PC-9 (cell line): ENCODE measurements at regions of chrX and their contacts with region 1.

Region 1: GRCh38 chrX:13721819-13722519 is 12.5 kb downstream of the TRAPPC2 start:
- DNase-seq: peak; percentile 11 to 85
- H3K4me3 ChIP-seq: no peak overlapping the region
- H3K27ac ChIP-seq: peak overlapping the region; percentile 46; the same call in 1 of the 2 replicates
- H3K4me1 ChIP-seq: peaks cover 15% of the 10 kb centered on the region
- H3K27me3 ChIP-seq: no peaks in the 10 kb centered on the region
- CTCF ChIP-seq: no peak

Region 2: GRCh38 chrX:13837290-13837745 is 115.3 kb after region 1 on chrX:
- CTCF ChIA-PET with region 1: no interaction called
- POLR2A ChIA-PET with region 1: interaction called, 23 read pairs
- intact Hi-C with region 1: no loop called
- DNase-seq: no peak
- H3K4me3 ChIP-seq: no peak overlapping the region
- H3K27ac ChIP-seq: no peak overlapping the region
- H3K4me1 ChIP-seq: no peaks in the 10 kb centered on the region
- H3K27me3 ChIP-seq: no peaks in the 10 kb centered on the region
- CTCF ChIP-seq: no peak